Endothelial cell of umbilical vein (primary cell): ENCODE measurements at regions of chr4 and their contacts with region 1.

Region 1: GRCh38 chr4:71009890-71010588 is 16.6 kb downstream of the DCK start:
- DNase-seq: peak; percentile 67
- H3K4me3 ChIP-seq: no peak overlapping the region
- H3K27ac ChIP-seq: no peak overlapping the region
- H3K4me1 ChIP-seq: peaks cover 2% of the 10 kb centered on the region
- H3K27me3 ChIP-seq: no peaks in the 10 kb centered on the region
- CTCF ChIP-seq: peak; percentile 46 to 47
- POLR2A ChIP-seq: no peak

Region 2: GRCh38 chr4:70651864-70652506 is 358.1 kb before region 1 on chr4:
- CTCF ChIA-PET with region 1: interaction called, 78 read pairs
- POLR2A ChIA-PET with region 1: no interaction called
- dilution Hi-C with region 1: no loop called
- intact Hi-C with region 1: loop called (anchors 1 kb)
- DNase-seq: peak; percentile 55
- H3K4me3 ChIP-seq: no peak overlapping the region
- H3K27ac ChIP-seq: no peak overlapping the region
- H3K4me1 ChIP-seq: peaks cover 12% of the 10 kb centered on the region
- H3K27me3 ChIP-seq: peaks cover 0 to 8% of the 10 kb centered on the region in 2 experiments
- CTCF ChIP-seq: peak; percentile 23 to 29
- POLR2A ChIP-seq: no peak

Region 3: DNA sequence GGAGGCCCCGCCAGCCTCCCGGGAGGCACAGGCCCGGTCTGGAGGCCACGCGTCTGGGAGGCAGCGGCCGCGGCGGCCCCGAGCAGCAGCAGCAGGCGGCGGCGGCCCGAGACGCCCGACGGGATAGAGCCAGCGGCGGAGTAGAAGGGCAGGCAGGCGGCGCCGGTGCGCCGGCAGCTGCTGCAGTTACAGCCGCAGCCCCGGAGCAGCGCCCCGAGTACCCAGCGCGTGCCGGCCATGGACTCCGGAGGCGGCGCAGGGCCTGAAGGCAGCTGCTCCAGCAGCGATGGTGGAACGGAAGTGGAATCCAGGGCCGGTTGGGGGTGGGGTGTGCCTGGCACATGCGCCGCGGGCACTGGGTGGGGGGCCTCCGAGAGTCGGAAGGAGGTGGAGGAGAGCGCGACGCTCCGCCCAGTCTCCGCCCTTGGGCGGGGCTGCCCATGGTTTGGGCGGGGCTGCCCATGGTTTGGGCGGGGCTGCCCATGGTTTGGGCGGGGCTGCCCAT is 170.4 kb before region 1 on chr4 and contains the start of gene GRSF1:
- CTCF ChIA-PET with region 1: interaction called, 17 read pairs
- POLR2A ChIA-PET with region 1: no interaction called
- dilution Hi-C with region 1: no loop called
- intact Hi-C with region 1: loop called (anchors 5 kb)
- DNase-seq: peak; percentile 91
- H3K4me3 ChIP-seq: peak within 1 kb of the TSS; percentile 54 to 81 (median 80)
- H3K27ac ChIP-seq: peak within 1 kb of the TSS; percentile 60
- H3K4me1 ChIP-seq: peaks cover 2% of the 10 kb centered on the region
- H3K27me3 ChIP-seq: no peaks in the 10 kb centered on the region
- CTCF ChIP-seq: no peak
- POLR2A ChIP-seq: peak; percentile 87
- total RNA-seq, gene GRSF1: 70.7 and 71.6 TPM in 2 replicates

Region 4: GRCh38 chr4:70901984-70902576 is 108.0 kb before region 1 on chr4 and contains the start of gene MOB1B:
- CTCF ChIA-PET with region 1: interaction called, 13 read pairs
- POLR2A ChIA-PET with region 1: no interaction called
- dilution Hi-C with region 1: no loop called
- intact Hi-C with region 1: loop called (anchors 5 kb)
- DNase-seq: peak; percentile 88
- H3K4me3 ChIP-seq: peak within 1 kb of the TSS; percentile 64 to 99 (median 96)
- H3K27ac ChIP-seq: peak within 1 kb of the TSS; percentile 71
- H3K4me1 ChIP-seq: peaks cover 14% of the 10 kb centered on the region
- H3K27me3 ChIP-seq: no peaks in the 10 kb centered on the region
- CTCF ChIP-seq: peak in 1 of 2 donors; percentile 24
- POLR2A ChIP-seq: peak; percentile 83
- total RNA-seq, gene MOB1B: 23.9 and 25.9 TPM in 2 replicates

Region 5: GRCh38 chr4:70993181-70994068 is 16.6 kb before region 1 on chr4 and contains the start of gene DCK:
- CTCF ChIA-PET with region 1: interaction called, 97 read pairs
- POLR2A ChIA-PET with region 1: interaction called, 4 read pairs
- dilution Hi-C with region 1: no loop called
- intact Hi-C with region 1: loop called (anchors 1 kb)
- DNase-seq: peak; percentile 92
- H3K4me3 ChIP-seq: peak within 1 kb of the TSS; percentile 91 to 92 (median 91)
- H3K27ac ChIP-seq: peak within 1 kb of the TSS; percentile 65
- H3K4me1 ChIP-seq: peaks cover 14% of the 10 kb centered on the region
- H3K27me3 ChIP-seq: no peaks in the 10 kb centered on the region
- CTCF ChIP-seq: no peak
- POLR2A ChIP-seq: peak; percentile 73
- total RNA-seq, gene DCK: 18.0 and 19.9 TPM in 2 replicates

Region 6: GRCh38 chr4:71020611-71021010 is 10.6 kb after region 1 on chr4:
- CTCF ChIA-PET with region 1: interaction called, 76 read pairs
- POLR2A ChIA-PET with region 1: no interaction called
- dilution Hi-C with region 1: no loop called
- intact Hi-C with region 1: no loop called
- DNase-seq: peak; percentile 35
- H3K4me3 ChIP-seq: no peak overlapping the region
- H3K27ac ChIP-seq: no peak overlapping the region
- H3K4me1 ChIP-seq: no peaks in the 10 kb centered on the region
- H3K27me3 ChIP-seq: no peaks in the 10 kb centered on the region
- CTCF ChIP-seq: no peak
- POLR2A ChIP-seq: no peak

Region 7: GRCh38 chr4:71026086-71026485 is 16.0 kb after region 1 on chr4:
- CTCF ChIA-PET with region 1: interaction called, 76 read pairs
- POLR2A ChIA-PET with region 1: no interaction called
- dilution Hi-C with region 1: no loop called
- intact Hi-C with region 1: no loop called
- DNase-seq: peak; percentile 82
- H3K4me3 ChIP-seq: no peak overlapping the region
- H3K27ac ChIP-seq: no peak overlapping the region
- H3K4me1 ChIP-seq: peaks cover 8% of the 10 kb centered on the region
- H3K27me3 ChIP-seq: no peaks in the 10 kb centered on the region
- CTCF ChIP-seq: no peak
- POLR2A ChIP-seq: no peak